Testis (tissue), 5 donors: ENCODE measurements at regions of chr5 and their contacts with region 1.

Region 1: GRCh38 chr5:141524604-141525597 is 36.0 kb downstream of the PCDHGC5 start:
- DNase-seq: peak; percentile 92
- H3K4me3 ChIP-seq: no peak overlapping the region
- H3K27ac ChIP-seq: peak overlapping the region; percentile 47 to 72
- H3K4me1 ChIP-seq: peaks cover 48% of the 10 kb centered on the region
- H3K27me3 ChIP-seq: no peaks in the 10 kb centered on the region
- CTCF ChIP-seq: peak; percentile 99 to 100 (median 100)
- POLR2A ChIP-seq: no peak

Region 2: DNA sequence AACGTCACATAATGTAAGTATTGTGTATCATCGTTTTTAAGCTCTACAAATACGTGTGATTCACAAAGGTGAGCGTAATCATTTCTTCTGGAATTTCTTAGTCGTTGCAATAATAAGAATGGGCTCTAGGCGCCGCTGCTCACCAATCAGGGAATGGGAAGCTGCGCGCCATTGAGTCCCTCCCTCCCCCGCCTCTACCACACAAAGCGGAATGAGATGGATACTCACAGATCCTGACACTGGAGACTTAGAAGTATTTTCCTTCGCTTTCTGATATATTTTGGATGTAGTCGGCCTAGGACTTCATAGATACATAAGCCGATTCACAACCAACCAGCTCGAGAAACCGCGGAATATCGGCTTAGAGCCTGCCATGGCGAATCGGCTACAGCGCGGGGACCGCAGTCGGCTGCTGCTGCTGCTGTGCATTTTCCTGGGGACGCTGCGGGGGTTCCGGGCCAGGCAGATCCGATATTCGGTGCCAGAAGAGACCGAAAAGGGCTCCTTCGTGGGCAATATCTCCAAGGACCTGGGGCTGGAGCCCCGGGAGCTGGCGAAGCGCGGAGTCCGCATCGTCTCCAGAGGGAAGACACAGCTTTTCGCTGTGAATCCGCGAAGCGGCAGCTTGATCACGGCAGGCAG is 103.9 kb before region 1 on chr5 and contains the start of gene PCDHGA11:
- intact Hi-C with region 1: loop called (anchors 10 kb)
- DNase-seq: peak; percentile 73
- H3K4me3 ChIP-seq: peak within 1 kb of the TSS; percentile 26 to 27
- H3K27ac ChIP-seq: no peak within 1 kb of the TSS
- H3K4me1 ChIP-seq: peaks cover 3% of the 10 kb centered on the region
- H3K27me3 ChIP-seq: no peaks in the 10 kb centered on the region
- CTCF ChIP-seq: peak; percentile 17 to 51 (median 23)
- POLR2A ChIP-seq: no peak
- total RNA-seq, gene PCDHGA11: 8.4 to 9.1 TPM

Region 3: DNA sequence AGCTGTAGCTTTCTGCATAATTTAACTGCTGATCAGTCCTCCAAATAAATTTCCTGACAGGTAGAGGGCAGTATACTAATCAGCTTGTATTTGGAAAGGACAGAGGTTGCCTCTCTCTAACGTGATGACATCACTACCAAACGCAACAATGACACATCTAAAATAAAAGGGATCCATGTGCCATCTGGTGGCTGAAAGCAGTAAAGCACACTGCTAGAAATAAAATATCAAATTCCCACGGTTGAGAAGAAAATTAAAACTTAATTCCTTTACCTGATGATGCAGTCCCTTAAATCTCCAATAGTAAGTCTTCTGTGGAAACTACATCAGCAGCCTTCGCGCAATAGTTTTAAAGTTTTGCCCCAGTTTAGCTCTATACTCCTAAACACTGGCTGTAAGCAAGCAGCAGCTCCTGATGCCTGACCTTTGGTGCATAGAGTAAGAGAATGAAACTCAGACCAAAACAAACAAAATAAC is 39.4 kb after region 1 on chr5:
- intact Hi-C with region 1: no loop called
- DNase-seq: peak; percentile 92
- H3K4me3 ChIP-seq: no peak overlapping the region
- H3K27ac ChIP-seq: peak overlapping the region in 1 of 2 donors; percentile 25
- H3K4me1 ChIP-seq: no peaks in the 10 kb centered on the region
- H3K27me3 ChIP-seq: no peaks in the 10 kb centered on the region
- CTCF ChIP-seq: peak; percentile 98 to 100 (median 100)
- POLR2A ChIP-seq: no peak